ENCODE measurements at regions of chr12 and their contacts with region 1.

Region 1: GRCh38 chr12:57238854-57239554 is 9.5 kb downstream of the SHMT2 start:
- DNase-seq: peak; percentile 67 to 80
- ATAC-seq: peak; percentile 55
- H3K4me3 ChIP-seq: peak overlapping the region; percentile 47 to 69 (median 60)
- H3K27ac ChIP-seq: peak overlapping the region in 3 of 4 donors; percentile 57 to 82 (median 58)
- H3K4me1 ChIP-seq: peaks cover 36 to 54% of the 10 kb centered on the region in 2 donors
- H3K27me3 ChIP-seq: peaks cover 19 to 21% (median 21%) of the 10 kb centered on the region in 3 donors
- CTCF ChIP-seq: peak; percentile 100
- POLR2A ChIP-seq: no peak

Region 2: DNA sequence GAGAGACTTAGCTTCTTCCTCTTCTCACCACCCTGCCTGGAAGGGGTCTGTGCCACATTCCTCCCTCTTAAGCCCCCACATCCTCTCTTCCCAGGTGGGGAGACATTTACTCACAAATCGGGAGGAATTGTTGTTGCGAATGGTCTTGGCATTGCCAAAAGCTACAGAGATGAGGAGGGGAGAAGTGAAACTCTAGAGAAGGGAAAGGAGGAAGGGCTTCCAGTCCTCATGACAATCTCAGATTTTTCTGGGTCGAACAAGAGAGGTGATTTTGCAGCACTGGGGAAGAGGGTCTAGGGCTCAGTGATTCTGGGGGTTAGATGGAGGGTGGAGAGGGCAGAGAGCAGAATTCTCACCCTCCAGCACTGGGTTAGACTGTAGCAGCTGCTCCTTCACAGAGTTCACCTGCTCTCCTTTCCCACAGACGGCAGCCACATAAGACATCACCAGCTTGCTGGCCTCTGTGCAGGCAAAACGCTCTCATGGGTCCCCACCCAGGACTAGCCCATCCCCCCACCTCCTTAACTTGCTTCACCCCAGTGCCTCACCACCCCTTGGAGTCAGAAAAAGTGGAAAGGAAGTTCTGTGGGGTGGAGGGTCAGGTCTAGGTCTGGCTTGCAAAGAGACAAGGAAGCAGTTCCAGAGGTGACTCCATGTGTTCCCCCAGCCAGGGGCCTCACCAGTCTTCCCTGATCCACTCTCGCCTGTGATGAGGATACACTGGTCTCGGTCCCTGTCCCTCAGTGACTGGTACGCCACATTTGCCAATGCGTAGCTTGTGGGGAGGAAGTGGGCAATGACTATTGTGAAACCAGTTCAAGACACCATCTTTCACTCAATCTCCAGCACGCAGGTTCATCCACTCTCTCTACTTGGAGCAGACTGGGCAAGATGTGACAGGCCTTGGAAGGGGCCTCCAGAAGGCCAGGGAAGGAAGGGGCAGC is 191.8 kb before region 1 on chr12:
- in situ Hi-C with region 1: no loop called
- intact Hi-C with region 1: no loop called
- DNase-seq: no peak
- ATAC-seq: no peak
- H3K4me3 ChIP-seq: no peak overlapping the region
- H3K27ac ChIP-seq: no peak overlapping the region
- H3K4me1 ChIP-seq: no peaks in the 10 kb centered on the region
- H3K27me3 ChIP-seq: peaks cover 0 to 16% (median 4%) of the 10 kb centered on the region in 3 donors
- CTCF ChIP-seq: no peak
- POLR2A ChIP-seq: no peak

Region 3: GRCh38 chr12:57213058-57213715 is 25.8 kb before region 1 on chr12:
- in situ Hi-C with region 1: no loop called
- intact Hi-C with region 1: loop called (anchors 1 kb)
- DNase-seq: peak; percentile 72 to 85
- ATAC-seq: peak; percentile 75 to 78
- H3K4me3 ChIP-seq: no peak overlapping the region
- H3K27ac ChIP-seq: no peak overlapping the region
- H3K4me1 ChIP-seq: peaks cover 6 to 23% of the 10 kb centered on the region in 2 donors
- H3K27me3 ChIP-seq: peaks cover 30 to 35% (median 34%) of the 10 kb centered on the region in 3 donors
- CTCF ChIP-seq: peak; percentile 78 to 98 (median 91)
- POLR2A ChIP-seq: no peak

Region 4: GRCh38 chr12:57258977-57259970 is 20.3 kb after region 1 on chr12:
- in situ Hi-C with region 1: no loop called
- intact Hi-C with region 1: loop called (anchors 2 kb)
- DNase-seq: peak in 1 of 2 donors; percentile 47
- ATAC-seq: no peak
- H3K4me3 ChIP-seq: no peak overlapping the region
- H3K27ac ChIP-seq: peak overlapping the region; percentile 82 to 85 (median 82)
- H3K4me1 ChIP-seq: peaks cover 59 to 71% of the 10 kb centered on the region in 2 donors
- H3K27me3 ChIP-seq: no peaks in the 10 kb centered on the region
- CTCF ChIP-seq: no peak
- POLR2A ChIP-seq: no peak

Region 5: GRCh38 chr12:57430931-57431720 is 192.1 kb after region 1 on chr12 and contains the start of gene R3HDM2:
- in situ Hi-C with region 1: loop called in 1 of 4 experiments (anchors 10 kb)
- intact Hi-C with region 1: no loop called
- DNase-seq: peak; percentile 93 to 95
- ATAC-seq: peak; percentile 96 to 98
- H3K4me3 ChIP-seq: peak within 1 kb of the TSS; percentile 66 to 92 (median 70)
- H3K27ac ChIP-seq: peak within 1 kb of the TSS; percentile 91 to 95 (median 95)
- H3K4me1 ChIP-seq: peaks cover 6 to 14% of the 10 kb centered on the region in 2 donors
- H3K27me3 ChIP-seq: no peaks in the 10 kb centered on the region
- CTCF ChIP-seq: no peak
- POLR2A ChIP-seq: peak; percentile 93
- total RNA-seq, gene R3HDM2: 24.1 to 27.1 (median 25.6) TPM